PC-3 (cell line): ENCODE measurements at regions of chr20 and their contacts with region 1.

Region 1: DNA sequence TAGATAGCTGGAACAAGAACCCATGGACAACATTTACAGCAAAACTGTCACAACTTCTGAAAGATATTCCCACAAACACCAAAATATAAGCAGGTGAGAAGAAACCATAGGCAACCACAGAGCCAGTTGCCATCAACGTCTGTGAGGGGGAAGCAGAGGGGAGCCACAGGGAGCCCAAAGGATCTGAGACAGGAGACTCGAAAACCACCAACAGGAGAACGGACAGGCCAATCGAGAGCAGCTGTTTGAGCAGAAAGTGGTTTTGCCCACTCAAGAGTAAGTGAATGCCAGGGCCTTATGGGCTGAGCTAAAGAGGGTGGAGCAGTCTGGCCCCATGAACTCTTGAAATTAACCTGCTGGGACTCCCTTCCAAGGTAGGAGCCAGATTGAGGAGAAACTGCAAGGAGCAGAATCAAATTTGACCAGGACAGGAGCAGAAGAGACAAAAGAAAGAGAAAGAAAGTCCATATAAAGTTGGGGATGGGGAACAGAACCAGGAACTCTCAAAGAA is 195.4 kb downstream of the ANKRD60 start:
- DNase-seq: no peak
- ATAC-seq: no peak
- H3K4me3 ChIP-seq: no peak overlapping the region
- H3K27ac ChIP-seq: no peak overlapping the region
- H3K4me1 ChIP-seq: no peaks in the 10 kb centered on the region
- H3K27me3 ChIP-seq: no peaks in the 10 kb centered on the region
- CTCF ChIP-seq: no peak

Region 2: DNA sequence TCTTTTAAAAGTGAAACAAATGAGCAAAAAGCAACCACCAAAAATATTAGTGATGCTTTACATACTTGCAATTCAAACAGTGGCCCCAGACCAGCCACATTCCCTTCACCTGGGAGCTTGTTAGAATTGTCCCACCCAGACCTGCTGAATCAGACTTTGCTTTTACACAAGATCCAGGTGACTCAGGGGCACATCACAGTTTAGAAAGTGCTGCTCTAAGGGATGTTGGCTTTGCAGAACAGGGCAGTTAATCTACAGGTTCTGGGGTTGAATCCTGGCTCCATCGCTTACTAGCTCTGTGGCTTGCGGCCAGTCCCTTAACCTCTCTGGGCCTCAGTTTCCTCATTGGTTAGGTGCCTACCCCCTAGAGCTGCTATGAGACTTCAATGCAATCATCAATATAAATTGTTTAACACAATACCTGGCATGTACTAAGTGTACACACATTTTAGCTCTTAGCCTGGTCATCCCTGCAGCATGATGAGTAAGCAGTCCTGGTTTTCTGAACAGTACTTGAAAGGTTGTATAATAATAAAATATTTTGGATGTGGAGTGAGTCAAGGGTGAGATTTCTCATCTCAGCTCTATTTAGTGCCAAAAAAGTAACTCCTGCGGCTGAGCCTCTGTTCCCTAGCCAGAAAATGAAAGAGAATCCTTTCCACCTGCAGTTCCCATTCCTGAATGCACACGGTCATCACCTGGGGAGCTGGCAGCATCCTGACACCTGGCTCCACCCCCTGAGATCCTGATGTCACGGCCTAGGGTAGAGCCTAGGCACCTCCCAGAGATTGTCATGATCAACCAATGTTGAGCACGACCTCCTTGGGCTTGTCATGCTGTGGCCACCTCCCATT is 32.7 kb after region 1 on chr20:
- CTCF ChIA-PET with region 1: no interaction called
- POLR2A ChIA-PET with region 1: no interaction called
- intact Hi-C with region 1: loop called (anchors 5 kb)
- DNase-seq: peak; percentile 98
- ATAC-seq: peak; percentile 89
- H3K4me3 ChIP-seq: peak overlapping the region; percentile 39
- H3K27ac ChIP-seq: peak overlapping the region; percentile 91
- H3K4me1 ChIP-seq: peaks cover 31% of the 10 kb centered on the region
- H3K27me3 ChIP-seq: no peaks in the 10 kb centered on the region
- CTCF ChIP-seq: no peak

Region 3: GRCh38 chr20:58361481-58362205 is 328.6 kb after region 1 on chr20:
- CTCF ChIA-PET with region 1: no interaction called
- POLR2A ChIA-PET with region 1: no interaction called
- intact Hi-C with region 1: no loop called
- DNase-seq: peak; percentile 29
- ATAC-seq: no peak
- H3K4me3 ChIP-seq: no peak overlapping the region
- H3K27ac ChIP-seq: no peak overlapping the region
- H3K4me1 ChIP-seq: peaks cover 8% of the 10 kb centered on the region
- H3K27me3 ChIP-seq: no peaks in the 10 kb centered on the region
- CTCF ChIP-seq: no peak